ENCODE measurements at regions of chr19 and their contacts with region 1.

Region 1: DNA sequence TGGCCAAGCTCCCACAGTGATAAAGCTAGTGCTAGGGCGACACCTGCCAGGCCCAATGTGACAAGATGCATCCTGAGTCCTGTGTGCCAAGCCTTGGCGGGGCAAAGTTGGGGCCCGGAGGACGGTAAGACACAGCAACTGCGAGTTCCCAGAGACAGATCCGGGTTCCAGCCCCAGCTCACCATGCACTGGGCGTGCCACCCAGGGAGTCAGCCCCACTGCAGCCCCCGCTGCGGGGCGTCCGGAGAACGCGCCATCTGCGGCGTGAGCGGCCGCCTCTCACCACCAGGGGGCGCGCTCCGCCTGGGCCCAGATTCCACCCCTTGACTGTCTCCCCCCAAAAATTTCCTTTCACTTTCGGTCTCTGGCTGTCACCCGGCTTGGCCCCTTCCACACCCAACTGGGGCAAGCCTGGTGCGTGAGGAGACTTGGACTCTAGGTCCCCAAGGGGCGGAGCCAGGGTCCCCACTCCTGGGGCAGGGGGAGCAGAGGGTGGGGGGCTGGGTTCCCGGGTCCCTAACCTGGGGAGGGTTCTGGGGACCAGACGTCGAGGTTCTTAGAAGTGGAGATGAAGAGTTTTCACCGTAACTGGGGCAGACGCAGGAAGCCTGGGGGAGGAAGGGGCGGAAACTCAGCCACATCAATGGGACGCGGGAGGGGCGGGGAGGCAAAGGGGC is at the start of gene FLT3LG:
- DNase-seq: peak; percentile 94
- ATAC-seq: peak; percentile 52
- H3K4me3 ChIP-seq: peak within 1 kb of the TSS in 4 of 5 experiments; percentile 53 to 98 (median 70)
- H3K4me3 Mint-ChIP-seq: peak within 1 kb of the TSS; percentile 93
- H3K27ac ChIP-seq: peak within 1 kb of the TSS; percentile 75 to 81
- H3K27ac Mint-ChIP-seq: peak within 1 kb of the TSS; percentile 97
- H3K4me1 ChIP-seq: peaks cover 43 to 73% of the 10 kb centered on the region in 2 donors
- H3K4me1 Mint-ChIP-seq: peaks cover 57% of the 10 kb centered on the region
- H3K27me3 ChIP-seq: no peaks in the 10 kb centered on the region
- H3K27me3 Mint-ChIP-seq: no peaks in the 10 kb centered on the region
- CTCF ChIP-seq: peak; percentile 89
- total RNA-seq, gene FLT3LG: 27.8 and 31.0 TPM in 2 replicates

Region 2: GRCh38 chr19:49443366-49444099 is 30.5 kb before region 1 on chr19:
- CTCF ChIA-PET with region 1: interaction called, 70 read pairs
- POLR2A ChIA-PET with region 1: interaction called, 5 read pairs
- intact Hi-C with region 1: loop called (anchors 1 kb)
- DNase-seq: peak; percentile 98
- ATAC-seq: peak; percentile 85
- H3K4me3 ChIP-seq: peak overlapping the region; percentile 12 to 80 (median 71)
- H3K4me3 Mint-ChIP-seq: peak overlapping the region; percentile 93
- H3K27ac ChIP-seq: peak overlapping the region; percentile 65 to 72
- H3K27ac Mint-ChIP-seq: peak overlapping the region; percentile 95
- H3K4me1 ChIP-seq: peaks cover 18 to 31% of the 10 kb centered on the region in 2 donors
- H3K4me1 Mint-ChIP-seq: peaks cover 35% of the 10 kb centered on the region
- H3K27me3 ChIP-seq: peaks cover 2 to 39% (median 34%) of the 10 kb centered on the region in 4 experiments
- H3K27me3 Mint-ChIP-seq: peaks cover 37% of the 10 kb centered on the region
- CTCF ChIP-seq: peak; percentile 89

Region 3: DNA sequence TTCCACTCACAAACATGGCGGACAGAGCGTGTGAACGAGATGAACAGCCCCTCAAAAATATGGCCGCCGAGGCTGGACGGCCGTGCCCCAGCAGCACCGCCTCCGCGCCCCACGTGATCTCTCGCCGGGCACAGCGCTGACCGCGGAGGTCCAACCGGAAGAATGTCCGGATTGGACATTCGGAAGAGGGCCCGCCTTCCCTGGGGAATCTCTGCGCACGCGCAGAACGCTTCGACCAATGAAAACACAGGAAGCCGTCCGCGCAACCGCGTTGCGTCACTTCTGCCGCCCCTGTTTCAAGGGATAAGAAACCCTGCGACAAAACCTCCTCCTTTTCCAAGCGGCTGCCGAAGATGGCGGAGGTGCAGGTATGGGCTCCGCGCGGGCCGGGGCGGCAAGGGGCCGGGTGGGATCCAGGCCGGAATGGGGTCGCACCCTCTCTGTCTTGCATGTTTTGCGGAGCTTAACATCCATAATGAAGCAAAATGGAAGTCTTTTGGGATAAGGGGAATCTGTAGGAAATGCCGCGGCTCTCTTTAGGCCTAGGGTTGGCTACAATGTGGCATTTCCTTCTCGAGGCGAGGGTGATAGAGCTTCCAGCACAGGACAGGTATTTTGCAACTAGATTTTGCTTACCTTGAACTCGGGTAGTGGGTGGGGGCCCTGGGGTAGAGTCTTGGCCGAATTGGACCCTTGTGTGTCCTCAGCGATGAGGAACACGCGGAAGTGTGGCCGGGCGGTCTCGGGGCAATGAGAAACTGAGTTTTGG is 13.5 kb after region 1 on chr19 and contains the start of gene RPL13A:
- CTCF ChIA-PET with region 1: interaction called, 5 read pairs
- POLR2A ChIA-PET with region 1: interaction called, 10 read pairs
- intact Hi-C with region 1: loop called (anchors 1 kb)
- DNase-seq: peak; percentile 100
- ATAC-seq: peak; percentile 93
- H3K4me3 ChIP-seq: peak within 1 kb of the TSS; percentile 92 to 100 (median 97)
- H3K4me3 Mint-ChIP-seq: peak within 1 kb of the TSS; percentile 99
- H3K27ac ChIP-seq: peak within 1 kb of the TSS; percentile 91 to 97
- H3K27ac Mint-ChIP-seq: peak within 1 kb of the TSS; percentile 97
- H3K4me1 ChIP-seq: peaks cover 17 to 36% of the 10 kb centered on the region in 2 donors
- H3K4me1 Mint-ChIP-seq: peaks cover 42% of the 10 kb centered on the region
- H3K27me3 ChIP-seq: no peaks in the 10 kb centered on the region
- H3K27me3 Mint-ChIP-seq: no peaks in the 10 kb centered on the region
- CTCF ChIP-seq: no peak
- total RNA-seq, gene RPL13A: 5,221 and 5,457 TPM in 2 replicates

Region 4: DNA sequence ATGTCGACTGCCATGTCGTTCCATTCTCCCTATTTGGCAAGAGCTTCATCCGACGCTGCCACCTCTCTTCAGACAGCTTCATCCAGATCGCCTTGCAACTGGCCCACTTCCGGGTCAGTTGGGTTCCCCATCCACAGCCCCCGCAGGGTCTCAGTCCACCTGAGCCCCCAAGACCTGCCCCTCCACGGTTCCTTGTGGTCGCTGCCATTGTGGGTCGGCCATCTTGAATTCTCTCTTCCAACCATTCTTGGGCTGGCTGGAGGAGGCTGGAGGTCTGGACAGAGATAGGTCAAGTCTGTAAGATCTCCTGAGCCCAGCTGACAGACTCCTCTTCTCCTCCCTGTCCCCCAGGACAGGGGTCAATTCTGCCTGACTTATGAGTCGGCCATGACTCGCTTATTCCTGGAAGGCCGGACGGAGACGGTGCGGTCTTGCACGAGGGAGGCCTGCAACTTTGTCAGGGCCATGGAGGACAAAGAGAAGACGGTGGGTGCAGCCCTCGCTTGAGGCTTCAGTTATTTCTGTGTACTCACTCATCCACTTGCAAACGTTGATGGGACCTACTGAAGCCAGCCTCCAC is 236.5 kb after region 1 on chr19:
- CTCF ChIA-PET with region 1: no interaction called
- POLR2A ChIA-PET with region 1: no interaction called
- intact Hi-C with region 1: no loop called
- DNase-seq: no peak
- ATAC-seq: no peak
- H3K4me3 ChIP-seq: no peak overlapping the region
- H3K4me3 Mint-ChIP-seq: no peak overlapping the region
- H3K27ac ChIP-seq: no peak overlapping the region
- H3K27ac Mint-ChIP-seq: no peak overlapping the region
- H3K4me1 ChIP-seq: no peaks in the 10 kb centered on the region
- H3K4me1 Mint-ChIP-seq: no peaks in the 10 kb centered on the region
- H3K27me3 ChIP-seq: no peaks in the 10 kb centered on the region
- H3K27me3 Mint-ChIP-seq: peaks cover 4% of the 10 kb centered on the region
- CTCF ChIP-seq: no peak